A673 (cell line): ENCODE measurements at regions of chr16 and their contacts with region 1.

Region 1: GRCh38 chr16:55257966-55258613 is 65.9 kb upstream of the IRX6 start:
- DNase-seq: peak; percentile 78
- H3K4me3 ChIP-seq: no peak overlapping the region
- H3K27ac ChIP-seq: no peak overlapping the region
- H3K4me1 ChIP-seq: no peaks in the 10 kb centered on the region
- H3K27me3 ChIP-seq: no peaks in the 10 kb centered on the region
- CTCF ChIP-seq: peak; percentile 92

Region 2: DNA sequence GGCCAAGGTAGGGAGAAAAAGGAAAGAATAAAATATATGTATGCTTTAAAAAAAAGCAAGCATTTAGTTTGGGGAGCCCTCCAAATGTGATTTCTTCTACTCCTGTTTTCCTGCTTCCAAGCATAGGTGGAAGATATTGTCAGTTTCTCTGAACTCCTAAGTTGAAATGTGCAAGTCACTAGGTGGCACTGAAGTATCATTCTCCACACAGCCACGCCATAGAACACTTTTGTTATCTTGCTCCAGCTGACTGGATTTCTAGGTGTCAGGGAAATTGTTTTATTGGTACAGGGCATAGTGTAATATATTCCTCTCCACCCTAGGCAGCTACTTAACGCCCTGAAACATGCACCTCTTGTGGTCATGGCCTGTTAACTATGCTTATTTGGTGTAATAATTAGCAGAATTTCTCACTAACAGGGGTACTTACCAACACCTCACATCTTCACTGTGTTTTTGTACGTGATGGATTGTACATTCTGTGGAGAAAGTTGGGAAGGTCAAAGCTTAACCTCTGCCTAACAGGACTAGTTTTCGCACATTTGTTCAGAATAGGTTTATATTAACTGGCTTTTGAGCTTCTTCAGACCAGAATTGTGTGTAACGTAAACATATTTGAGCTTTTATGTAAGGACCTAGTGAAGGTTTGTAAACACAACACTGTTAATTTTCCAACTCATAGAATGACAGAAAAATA is 1484.8 kb before region 1 on chr16:
- CTCF ChIA-PET with region 1: no interaction called
- POLR2A ChIA-PET with region 1: no interaction called
- intact Hi-C with region 1: loop called (anchors 5 kb)
- DNase-seq: peak; percentile 86
- H3K4me3 ChIP-seq: no peak overlapping the region
- H3K27ac ChIP-seq: no peak overlapping the region
- H3K4me1 ChIP-seq: peaks cover 42% of the 10 kb centered on the region
- H3K27me3 ChIP-seq: no peaks in the 10 kb centered on the region
- CTCF ChIP-seq: peak; percentile 77

Region 3: GRCh38 chr16:53945996-53946395 is 1312.1 kb before region 1 on chr16:
- CTCF ChIA-PET with region 1: no interaction called
- POLR2A ChIA-PET with region 1: no interaction called
- intact Hi-C with region 1: loop called (anchors 2 kb)
- DNase-seq: peak; percentile 59
- H3K4me3 ChIP-seq: no peak overlapping the region
- H3K27ac ChIP-seq: no peak overlapping the region
- H3K4me1 ChIP-seq: peaks cover 7% of the 10 kb centered on the region
- H3K27me3 ChIP-seq: no peaks in the 10 kb centered on the region
- CTCF ChIP-seq: peak; percentile 90

Region 4: DNA sequence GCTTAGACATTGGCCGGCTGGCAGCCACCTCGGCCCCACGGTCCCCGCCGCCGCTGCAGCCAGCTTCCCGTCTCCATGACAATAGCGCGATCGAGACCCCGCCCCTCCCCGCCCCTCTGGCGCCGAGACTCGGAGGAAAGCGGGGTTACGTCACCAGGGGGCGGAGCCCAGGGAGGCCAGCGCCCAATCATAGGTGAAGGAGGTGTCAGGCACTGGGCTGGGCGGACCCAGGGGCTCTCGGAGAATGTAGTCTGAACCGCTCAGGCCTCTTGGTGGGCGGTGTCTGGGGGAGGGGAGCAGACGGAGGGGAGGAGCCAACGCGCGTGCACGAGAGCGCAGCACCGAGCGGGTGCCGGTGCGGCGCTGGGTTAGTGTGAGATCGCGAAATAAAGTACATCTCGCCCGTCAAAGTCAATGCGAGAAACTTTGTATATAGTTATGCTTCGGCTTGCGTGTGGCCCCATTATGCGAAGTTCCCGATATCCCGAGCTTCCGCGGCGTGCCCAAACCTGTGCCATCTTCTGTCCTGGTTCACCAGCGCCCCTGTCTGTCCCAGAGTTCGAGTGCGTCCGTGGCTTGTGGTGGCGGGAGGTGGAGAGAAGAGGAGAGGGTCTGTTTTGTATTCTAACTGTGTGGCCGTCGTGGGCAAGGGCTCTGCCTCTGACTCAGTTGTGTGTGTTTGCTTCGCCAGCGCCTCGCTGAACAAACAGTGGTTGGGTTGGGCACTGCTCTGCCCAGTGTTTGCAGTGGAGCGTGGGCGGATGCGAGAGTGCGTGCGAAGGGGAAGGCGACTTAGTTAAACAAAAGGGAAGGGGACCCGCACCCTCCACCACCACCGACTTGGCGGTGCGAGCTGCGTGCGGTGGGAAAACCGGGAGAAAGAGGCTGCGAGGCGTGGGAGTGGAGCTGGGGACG is 328.7 kb before region 1 on chr16:
- CTCF ChIA-PET with region 1: no interaction called
- POLR2A ChIA-PET with region 1: no interaction called
- intact Hi-C with region 1: loop called (anchors 10 kb)
- DNase-seq: peak; percentile 99
- H3K4me3 ChIP-seq: peak overlapping the region; percentile 88
- H3K27ac ChIP-seq: peak overlapping the region; percentile 89
- H3K4me1 ChIP-seq: peaks cover 24% of the 10 kb centered on the region
- H3K27me3 ChIP-seq: no peaks in the 10 kb centered on the region
- CTCF ChIP-seq: peak; percentile 41

Region 5: GRCh38 chr16:56237451-56237930 is 979.4 kb after region 1 on chr16:
- CTCF ChIA-PET with region 1: no interaction called
- POLR2A ChIA-PET with region 1: no interaction called
- intact Hi-C with region 1: no loop called
- DNase-seq: no peak
- H3K4me3 ChIP-seq: no peak overlapping the region
- H3K27ac ChIP-seq: no peak overlapping the region
- H3K4me1 ChIP-seq: no peaks in the 10 kb centered on the region
- H3K27me3 ChIP-seq: no peaks in the 10 kb centered on the region
- CTCF ChIP-seq: no peak